Mammary epithelial cell (primary cell): ENCODE measurements at regions of chr22 and their contacts with region 1.

Region 1: DNA sequence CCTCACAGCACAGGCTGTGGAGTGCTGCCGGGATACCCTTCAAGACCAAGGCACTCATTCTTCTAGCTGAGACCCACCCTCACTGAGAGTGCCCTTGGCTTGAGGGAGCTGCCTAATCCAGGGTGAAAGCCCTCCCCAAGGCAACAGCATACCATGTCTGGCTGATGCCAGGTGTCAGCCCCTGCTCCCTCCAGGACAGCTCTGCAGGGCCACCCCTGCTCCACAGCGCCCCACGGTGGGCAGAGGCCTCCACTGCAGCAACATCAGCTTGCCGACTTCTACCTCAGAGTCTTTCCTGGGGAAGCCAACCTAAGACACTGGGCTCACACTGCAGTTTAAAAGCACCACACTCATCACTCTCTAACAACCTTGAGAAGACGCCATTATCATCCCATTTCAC is 29.0 kb downstream of the TTLL1 start:
- DNase-seq: no peak
- H3K4me3 ChIP-seq: no peak overlapping the region
- H3K27ac ChIP-seq: no peak overlapping the region
- H3K4me1 ChIP-seq: no peaks in the 10 kb centered on the region
- H3K27me3 ChIP-seq: no peaks in the 10 kb centered on the region
- CTCF ChIP-seq: peak; percentile 59 to 64

Region 2: GRCh38 chr22:42880815-42881214 is 179.4 kb before region 1 on chr22:
- CTCF ChIA-PET with region 1: interaction called, 10 read pairs
- dilution Hi-C with region 1: no loop called
- in situ Hi-C with region 1: no loop called
- intact Hi-C with region 1: no loop called
- DNase-seq: no peak
- H3K4me3 ChIP-seq: no peak overlapping the region
- H3K27ac ChIP-seq: no peak overlapping the region
- H3K4me1 ChIP-seq: no peaks in the 10 kb centered on the region
- H3K27me3 ChIP-seq: no peaks in the 10 kb centered on the region
- CTCF ChIP-seq: peak in 1 of 2 donors; percentile 6

Region 3: GRCh38 chr22:43088979-43089717 is 29.0 kb after region 1 on chr22 and contains the start of gene TTLL1:
- CTCF ChIA-PET with region 1: no interaction called
- dilution Hi-C with region 1: no loop called
- in situ Hi-C with region 1: no loop called
- intact Hi-C with region 1: no loop called
- DNase-seq: peak; percentile 87
- H3K4me3 ChIP-seq: peak within 1 kb of the TSS; percentile 69 to 89 (median 70)
- H3K27ac ChIP-seq: peak within 1 kb of the TSS; percentile 43
- H3K4me1 ChIP-seq: peaks cover 12% of the 10 kb centered on the region
- H3K27me3 ChIP-seq: no peaks in the 10 kb centered on the region
- CTCF ChIP-seq: no peak
- total RNA-seq, gene TTLL1: 3.6 to 12.0 TPM

Region 4: GRCh38 chr22:43100211-43100610 is 40.0 kb after region 1 on chr22:
- CTCF ChIA-PET with region 1: no interaction called
- dilution Hi-C with region 1: loop called (anchors 5 kb)
- in situ Hi-C with region 1: no loop called
- intact Hi-C with region 1: no loop called
- DNase-seq: peak; percentile 53
- H3K4me3 ChIP-seq: no peak overlapping the region
- H3K27ac ChIP-seq: no peak overlapping the region
- H3K4me1 ChIP-seq: peaks cover 4% of the 10 kb centered on the region
- H3K27me3 ChIP-seq: no peaks in the 10 kb centered on the region
- CTCF ChIP-seq: no peak